K562 (cell line): ENCODE measurements at regions of chr13 and their contacts with region 1.

Region 1: GRCh38 chr13:27980280-27980998 is 8.1 kb downstream of the URAD start:
- DNase-seq: no peak
- ATAC-seq: no peak
- H3K4me3 ChIP-seq: no peak overlapping the region
- H3K27ac ChIP-seq: no peak overlapping the region
- H3K4me1 ChIP-seq: 0 out of 5 replicates have a peak, but pooled peaks cover 0 to 3% of the 10 kb centered on the region in 2 experiments
- H3K27me3 ChIP-seq: peaks cover 3 to 39% of the 10 kb centered on the region in 2 experiments; a peak in 4 of 5 replicates
- CTCF ChIP-seq: no peak
- EP300 ChIP-seq: no peak
- POLR2A ChIP-seq: no peak
- RAD21 ChIP-seq: no peak

Region 2: GRCh38 chr13:27362064-27362883 is 618.2 kb before region 1 on chr13:
- CTCF ChIA-PET with region 1: interaction called, 12 read pairs
- POLR2A ChIA-PET with region 1: interaction called, 3 read pairs
- in situ Hi-C with region 1: no loop called
- intact Hi-C with region 1: no loop called
- DNase-seq: peak; percentile 82 to 83 (median 82)
- ATAC-seq: peak; percentile 97
- H3K4me3 ChIP-seq: peak overlapping the region; percentile 30
- H3K27ac ChIP-seq: no peak overlapping the region
- H3K4me1 ChIP-seq: peaks cover 0 to 7% of the 10 kb centered on the region in 2 experiments; a peak in 2 of 5 replicates
- H3K27me3 ChIP-seq: peaks cover 7 to 19% of the 10 kb centered on the region in 2 experiments; a peak in 4 of 5 replicates
- CTCF ChIP-seq: peak; percentile 86 to 90 (median 90)
- EP300 ChIP-seq: no peak
- POLR2A ChIP-seq: no peak
- RAD21 ChIP-seq: peak; percentile 72 to 86

Region 3: DNA sequence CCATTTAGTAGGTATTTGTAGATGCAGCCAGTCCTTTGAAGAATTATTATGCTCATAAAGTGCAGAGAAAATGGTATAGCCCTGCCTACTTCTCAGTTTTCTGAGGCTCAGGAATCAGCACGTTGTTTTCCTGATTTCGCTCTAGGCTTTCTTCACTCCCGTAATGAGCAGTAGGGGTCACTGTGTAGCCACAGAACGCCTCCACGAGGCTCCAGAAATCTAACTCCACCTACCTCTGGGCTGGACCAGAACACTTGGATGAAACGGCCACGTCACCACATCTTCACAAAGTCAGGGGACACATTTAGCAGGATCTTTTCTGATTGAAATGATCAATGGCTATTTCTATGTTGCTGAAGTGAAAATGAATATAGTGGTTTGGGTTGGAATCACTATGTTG is 605.8 kb before region 1 on chr13:
- CTCF ChIA-PET with region 1: no interaction called
- POLR2A ChIA-PET with region 1: no interaction called
- in situ Hi-C with region 1: loop called (anchors 5 kb)
- intact Hi-C with region 1: loop called (anchors 5 kb)
- DNase-seq: peak; percentile 64 to 77 (median 68)
- ATAC-seq: peak; percentile 98
- H3K4me3 ChIP-seq: no peak overlapping the region
- H3K27ac ChIP-seq: no peak overlapping the region
- H3K4me1 ChIP-seq: no peaks in the 10 kb centered on the region
- H3K27me3 ChIP-seq: peaks cover 11 to 35% of the 10 kb centered on the region in 2 experiments; a peak in 4 of 5 replicates
- CTCF ChIP-seq: peak; percentile 76 to 81 (median 78)
- EP300 ChIP-seq: no peak
- POLR2A ChIP-seq: no peak
- RAD21 ChIP-seq: peak; percentile 55 to 70

Region 4: DNA sequence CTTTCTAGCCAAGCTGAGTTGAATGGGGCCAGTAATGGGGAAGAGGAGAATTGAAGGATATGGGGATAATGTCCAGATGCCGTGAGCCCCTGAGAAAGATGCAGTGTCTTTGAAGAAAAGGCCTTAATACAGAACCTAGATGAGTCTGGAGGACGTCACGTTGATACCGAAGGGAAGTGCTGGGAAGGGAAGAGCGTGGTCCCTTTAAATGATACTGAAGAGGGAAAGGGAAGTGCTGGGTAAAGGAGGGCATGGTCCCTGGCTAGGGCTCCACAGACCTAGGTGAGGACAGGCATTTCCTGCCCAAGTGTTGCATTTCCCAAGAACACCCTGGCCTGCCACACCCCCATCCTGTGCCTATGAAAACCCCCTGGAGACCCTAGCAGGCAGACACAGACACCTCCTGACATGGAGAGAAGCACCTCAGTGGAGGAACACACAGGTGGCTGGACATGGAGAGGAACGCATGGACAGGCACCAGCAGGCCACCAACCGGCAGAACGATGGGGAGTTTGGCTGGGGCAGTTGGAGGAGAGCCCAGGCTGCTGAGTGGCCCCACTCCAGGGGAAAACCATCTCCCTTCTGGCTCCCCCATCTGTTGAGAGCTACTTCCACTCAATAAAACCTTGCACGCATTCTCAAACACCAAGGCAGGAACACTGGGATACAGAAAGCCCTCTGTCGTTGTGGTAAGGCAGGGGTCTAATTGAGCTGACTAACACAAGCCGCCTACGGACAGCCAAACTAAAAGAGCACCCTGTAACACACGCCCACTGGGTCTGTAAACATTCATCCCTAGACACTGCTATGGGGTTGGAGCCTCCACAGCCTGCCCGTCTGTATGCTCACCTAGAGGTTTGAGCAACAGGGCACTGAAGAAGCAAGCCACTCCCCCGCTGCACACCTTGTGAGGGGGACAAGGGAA is 643.6 kb after region 1 on chr13:
- CTCF ChIA-PET with region 1: no interaction called
- POLR2A ChIA-PET with region 1: no interaction called
- in situ Hi-C with region 1: no loop called
- intact Hi-C with region 1: no loop called
- DNase-seq: peak in 1 of 4 experiments; percentile 28
- ATAC-seq: peak; percentile 38; the same call in 2 of the 3 replicates
- H3K4me3 ChIP-seq: no peak overlapping the region
- H3K27ac ChIP-seq: no peak overlapping the region
- H3K4me1 ChIP-seq: peaks cover 0 to 9% of the 10 kb centered on the region in 2 experiments; a peak in 3 of 5 replicates
- H3K27me3 ChIP-seq: no peaks in the 10 kb centered on the region
- CTCF ChIP-seq: no peak
- EP300 ChIP-seq: no peak
- POLR2A ChIP-seq: no peak
- RAD21 ChIP-seq: no peak